ENCODE measurements at regions of chr3 and their contacts with region 1.

Region 1: GRCh38 chr3:6717026-6717943 is 143.6 kb upstream of the GRM7 start:
- DNase-seq: no peak
- H3K4me3 ChIP-seq: no peak overlapping the region
- H3K27ac ChIP-seq: no peak overlapping the region
- H3K4me1 ChIP-seq: no peaks in the 10 kb centered on the region
- H3K27me3 ChIP-seq: no peaks in the 10 kb centered on the region
- CTCF ChIP-seq: no peak
- EP300 ChIP-seq: no peak
- POLR2A ChIP-seq: no peak

Region 2: DNA sequence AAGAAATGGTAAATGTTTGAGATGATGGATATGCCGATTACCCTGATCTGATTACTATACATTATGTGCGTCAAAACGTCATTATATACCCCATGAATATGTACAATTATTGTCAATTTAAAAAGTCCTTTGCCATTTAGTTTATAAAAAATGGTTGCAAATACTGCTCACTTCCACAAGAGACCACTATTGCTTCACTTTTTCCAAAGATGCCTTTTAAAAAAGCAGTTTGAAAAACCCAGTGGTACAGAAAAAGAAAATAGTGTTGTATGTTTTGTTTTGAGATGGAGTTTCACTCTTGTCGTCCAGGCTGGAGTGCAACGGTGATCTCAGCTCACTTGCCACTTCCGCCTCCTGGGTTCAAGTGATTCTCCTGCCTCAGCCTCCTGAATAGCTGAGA is 1490.5 kb before region 1 on chr3:
- in situ Hi-C with region 1: loop called in 1 of 4 experiments (anchors 25 kb)
- intact Hi-C with region 1: no loop called
- DNase-seq: no peak
- H3K4me3 ChIP-seq: no peak overlapping the region
- H3K27ac ChIP-seq: no peak overlapping the region
- H3K4me1 ChIP-seq: peaks cover 0 to 11% (median 0%) of the 10 kb centered on the region in 4 donors
- H3K27me3 ChIP-seq: no peaks in the 10 kb centered on the region
- CTCF ChIP-seq: peak; percentile 11 to 41 (median 25)
- EP300 ChIP-seq: no peak
- POLR2A ChIP-seq: no peak

Measured in transverse colon (tissue), 4 donors.